Psoas muscle (tissue), 8 donors: ENCODE measurements at regions of chr1 and their contacts with region 1.

Region 1: DNA sequence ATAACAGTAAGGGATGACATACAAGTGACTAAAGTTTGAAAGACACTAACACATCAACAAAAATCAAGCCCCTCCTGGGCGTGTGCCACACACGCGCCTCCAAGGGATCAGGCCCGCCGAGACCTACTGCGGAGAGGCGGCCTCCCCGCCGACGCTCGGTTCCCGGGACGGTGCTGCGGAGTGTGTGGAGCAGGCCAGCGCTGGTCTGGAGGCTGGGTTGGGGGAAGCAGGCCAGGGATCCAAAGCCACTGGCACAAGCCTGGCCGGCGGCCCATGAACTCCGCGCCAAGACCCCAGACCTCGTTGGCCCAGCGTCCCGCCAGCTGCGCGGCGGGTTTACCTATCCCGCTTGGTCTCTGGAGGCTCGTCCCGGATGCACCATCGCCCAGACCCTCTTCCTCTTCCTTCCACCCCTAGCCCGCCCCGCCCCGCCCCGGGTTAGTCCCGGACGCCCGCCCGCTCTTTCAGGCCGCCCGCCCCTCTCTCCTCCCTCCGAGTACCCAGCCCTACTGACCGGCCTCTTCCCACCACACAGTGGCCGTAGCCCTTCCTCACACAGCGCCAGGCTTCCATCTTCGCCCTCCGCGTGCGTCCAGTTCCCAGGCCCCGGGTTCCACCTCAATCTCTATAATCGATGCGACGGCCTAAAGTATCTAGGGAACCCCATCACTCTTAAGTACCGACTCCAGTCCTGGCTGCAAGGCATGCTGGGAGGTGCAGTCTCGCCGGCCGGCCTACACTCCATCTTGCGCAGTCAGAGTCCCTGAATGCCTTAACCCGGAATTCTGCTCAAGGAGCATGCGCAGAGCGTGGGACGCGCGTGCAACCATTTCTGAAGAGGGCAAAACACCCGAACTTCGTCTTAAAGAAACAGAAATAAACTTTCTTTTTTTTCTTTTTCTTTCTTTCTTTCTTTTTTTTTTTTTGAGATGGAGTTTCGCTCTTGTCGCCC is at the start of gene ANGEL2:
- DNase-seq: peak; percentile 97 to 98
- ATAC-seq: peak; percentile 98 to 99 (median 98)
- H3K4me3 ChIP-seq: peak within 1 kb of the TSS; percentile 92
- H3K27ac ChIP-seq: peak within 1 kb of the TSS; percentile 88
- H3K4me1 ChIP-seq: peaks cover 22% of the 10 kb centered on the region
- H3K27me3 ChIP-seq: no peaks in the 10 kb centered on the region
- CTCF ChIP-seq: no peak
- total RNA-seq, gene ANGEL2: 18.2 to 24.9 (median 19.5) TPM

Region 2: DNA sequence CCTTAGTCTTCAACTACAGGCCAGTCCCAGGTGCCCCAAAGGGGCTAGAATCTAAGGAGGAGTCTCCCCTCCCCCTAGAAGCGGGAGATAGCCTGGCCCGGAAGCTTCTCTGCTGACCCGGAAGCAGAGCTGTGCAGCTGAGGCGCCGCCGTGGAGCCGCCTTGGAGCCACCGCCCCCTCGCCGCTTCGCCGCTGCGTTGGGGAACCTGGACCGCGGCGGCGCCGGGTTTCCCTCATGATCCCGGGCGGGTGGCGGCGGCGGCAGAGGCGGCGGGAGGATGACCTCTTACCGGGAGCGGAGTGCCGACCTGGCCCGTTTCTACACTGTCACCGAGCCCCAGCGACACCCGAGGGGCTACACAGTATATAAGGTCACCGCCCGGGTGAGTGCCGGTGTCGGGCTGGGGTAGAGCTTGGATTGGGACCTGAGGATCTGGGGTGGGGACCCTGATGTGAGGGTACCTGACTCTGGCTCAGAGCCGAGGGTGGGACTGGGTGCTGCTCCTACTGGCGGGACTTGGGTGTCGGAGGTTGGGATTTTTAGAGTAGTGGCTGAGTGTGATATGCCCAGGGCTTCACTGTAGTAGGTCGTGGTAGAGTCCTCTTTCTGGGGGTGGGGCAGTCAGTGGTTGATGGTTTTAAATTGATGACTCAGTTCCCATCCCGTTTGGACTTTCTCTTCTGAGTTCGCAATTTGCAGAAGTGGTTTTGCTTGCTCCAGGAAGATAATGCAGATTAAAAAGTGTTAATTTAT is 35.9 kb after region 1 on chr1 and contains the start of gene RPS6KC1:
- intact Hi-C with region 1: loop called (anchors 2 kb)
- DNase-seq: peak; percentile 86 to 92
- ATAC-seq: peak; percentile 99 to 100 (median 99)
- H3K4me3 ChIP-seq: peak within 1 kb of the TSS; percentile 96
- H3K27ac ChIP-seq: peak within 1 kb of the TSS; percentile 87
- H3K4me1 ChIP-seq: peaks cover 23% of the 10 kb centered on the region
- H3K27me3 ChIP-seq: peaks cover 0 to 12% (median 0%) of the 10 kb centered on the region in 3 donors
- CTCF ChIP-seq: no peak
- total RNA-seq, gene RPS6KC1: 12.1 to 15.7 (median 13.3) TPM